ENCODE measurements at regions of chr3 and their contacts with region 1.

Region 1: GRCh38 chr3:136752422-136753325 is 496 bp upstream of the STAG1 start:
- DNase-seq: peak; percentile 99
- H3K4me3 ChIP-seq: peak overlapping the region; percentile 84 to 95 (median 88)
- H3K27ac ChIP-seq: peak overlapping the region; percentile 92 to 99 (median 98)
- H3K4me1 ChIP-seq: peaks cover 0 to 42% (median 33%) of the 10 kb centered on the region in 4 donors
- H3K27me3 ChIP-seq: no peaks in the 10 kb centered on the region
- CTCF ChIP-seq: no peak
- EP300 ChIP-seq: peak in 1 of 4 donors; percentile 17
- POLR2A ChIP-seq: peak; percentile 33 to 78

Region 2: GRCh38 chr3:135851201-135852081 is 901.2 kb before region 1 on chr3:
- intact Hi-C with region 1: no loop called
- DNase-seq: no peak
- H3K4me3 ChIP-seq: no peak overlapping the region
- H3K27ac ChIP-seq: no peak overlapping the region
- H3K4me1 ChIP-seq: no peaks in the 10 kb centered on the region
- H3K27me3 ChIP-seq: no peaks in the 10 kb centered on the region
- CTCF ChIP-seq: no peak
- EP300 ChIP-seq: no peak
- POLR2A ChIP-seq: no peak

Region 3: DNA sequence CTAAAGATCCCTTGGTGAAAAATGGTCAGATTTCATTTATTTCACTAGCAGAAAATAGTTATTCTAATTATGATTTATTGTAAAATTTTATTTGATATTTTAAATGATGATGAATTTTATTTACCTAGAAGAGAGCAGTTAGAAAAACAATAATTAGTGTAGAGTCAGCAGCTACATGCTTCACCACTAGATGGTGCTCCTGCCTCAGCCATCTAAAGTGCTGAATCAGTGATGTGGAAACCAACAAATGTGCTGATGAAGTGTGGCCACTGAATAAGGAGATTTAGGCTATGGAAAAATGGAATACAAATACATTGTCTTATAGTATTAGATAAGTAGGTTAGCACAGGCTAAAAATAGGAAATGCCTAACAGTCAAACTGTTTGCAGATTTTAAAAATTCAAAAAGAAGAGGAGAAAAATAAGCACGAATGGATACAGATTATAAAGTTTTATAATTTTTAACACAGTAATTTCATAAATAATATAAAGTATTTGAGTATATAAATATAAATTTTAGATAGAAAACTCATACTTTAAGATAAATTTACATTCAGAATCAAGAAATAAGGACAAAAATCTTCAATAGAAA is 677.4 kb before region 1 on chr3:
- intact Hi-C with region 1: loop called (anchors 5 kb)
- DNase-seq: peak; percentile 80
- H3K4me3 ChIP-seq: no peak overlapping the region
- H3K27ac ChIP-seq: peak overlapping the region in 2 of 4 donors; percentile 26 to 38
- H3K4me1 ChIP-seq: peaks cover 0 to 26% (median 12%) of the 10 kb centered on the region in 4 donors
- H3K27me3 ChIP-seq: no peaks in the 10 kb centered on the region
- CTCF ChIP-seq: peak; percentile 75 to 93 (median 84)
- EP300 ChIP-seq: no peak
- POLR2A ChIP-seq: no peak

Region 4: DNA sequence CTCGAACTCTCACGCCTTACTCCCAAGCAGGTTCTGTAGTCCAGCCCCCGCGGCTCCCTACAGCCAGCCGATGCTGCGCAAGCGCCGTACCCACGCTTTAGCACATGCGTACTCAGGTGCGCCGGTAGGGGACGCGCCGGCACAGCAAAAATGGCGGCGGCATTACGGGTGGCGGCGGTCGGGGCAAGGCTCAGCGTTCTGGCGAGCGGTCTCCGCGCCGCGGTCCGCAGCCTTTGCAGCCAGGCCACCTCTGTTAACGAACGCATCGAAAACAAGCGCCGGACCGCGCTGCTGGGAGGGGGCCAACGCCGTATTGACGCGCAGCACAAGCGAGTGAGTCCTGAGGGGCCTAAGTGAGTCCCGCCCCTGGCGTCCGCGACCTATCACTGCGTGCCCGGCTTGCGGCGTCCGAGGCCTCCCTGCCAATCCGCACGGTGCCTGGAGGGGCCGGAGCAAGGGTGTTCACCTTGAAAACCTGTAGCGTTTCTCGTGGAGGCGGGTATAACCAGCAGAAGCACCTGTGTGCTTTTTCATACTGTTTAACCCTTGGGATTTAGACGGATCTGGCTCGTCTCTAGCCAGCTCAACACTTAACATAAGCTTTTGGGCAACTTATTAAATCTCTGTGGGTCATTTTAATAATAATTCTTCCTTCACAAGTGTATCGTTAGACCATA is 502.3 kb before region 1 on chr3 and contains the start of gene PCCB:
- intact Hi-C with region 1: loop called (anchors 2 kb)
- DNase-seq: peak; percentile 97
- H3K4me3 ChIP-seq: peak within 1 kb of the TSS; percentile 66 to 72 (median 68)
- H3K27ac ChIP-seq: peak within 1 kb of the TSS; percentile 89 to 93 (median 92)
- H3K4me1 ChIP-seq: peaks cover 0 to 18% (median 15%) of the 10 kb centered on the region in 4 donors
- H3K27me3 ChIP-seq: no peaks in the 10 kb centered on the region
- CTCF ChIP-seq: peak; percentile 80 to 97 (median 96)
- EP300 ChIP-seq: no peak
- POLR2A ChIP-seq: peak; percentile 15 to 23
- total RNA-seq, gene PCCB: 24.8 to 33.9 (median 29.0) TPM

Region 5: DNA sequence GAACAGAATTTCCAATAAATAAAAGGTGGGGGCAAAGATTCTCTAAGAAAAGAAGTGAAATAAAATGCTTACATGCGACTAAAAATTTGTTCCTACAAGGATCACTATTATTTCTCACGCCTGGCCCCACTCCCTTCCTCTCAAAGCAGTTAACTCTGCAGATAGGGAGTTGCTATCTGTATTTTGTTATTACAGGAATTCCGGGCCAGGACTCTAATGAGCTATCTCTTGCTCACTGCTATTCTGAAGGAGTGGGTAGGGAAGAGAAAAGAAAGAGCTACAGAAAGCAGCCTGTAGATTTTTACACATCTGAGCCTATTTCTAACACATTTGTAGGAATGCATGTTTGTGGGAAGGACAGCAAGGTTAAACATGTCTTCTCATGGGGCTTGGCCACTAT is 362.1 kb before region 1 on chr3:
- intact Hi-C with region 1: loop called (anchors 2 kb)
- DNase-seq: no peak
- H3K4me3 ChIP-seq: no peak overlapping the region
- H3K27ac ChIP-seq: no peak overlapping the region
- H3K4me1 ChIP-seq: peaks cover 0 to 15% (median 5%) of the 10 kb centered on the region in 4 donors
- H3K27me3 ChIP-seq: no peaks in the 10 kb centered on the region
- CTCF ChIP-seq: no peak
- EP300 ChIP-seq: no peak
- POLR2A ChIP-seq: no peak

Region 6: DNA sequence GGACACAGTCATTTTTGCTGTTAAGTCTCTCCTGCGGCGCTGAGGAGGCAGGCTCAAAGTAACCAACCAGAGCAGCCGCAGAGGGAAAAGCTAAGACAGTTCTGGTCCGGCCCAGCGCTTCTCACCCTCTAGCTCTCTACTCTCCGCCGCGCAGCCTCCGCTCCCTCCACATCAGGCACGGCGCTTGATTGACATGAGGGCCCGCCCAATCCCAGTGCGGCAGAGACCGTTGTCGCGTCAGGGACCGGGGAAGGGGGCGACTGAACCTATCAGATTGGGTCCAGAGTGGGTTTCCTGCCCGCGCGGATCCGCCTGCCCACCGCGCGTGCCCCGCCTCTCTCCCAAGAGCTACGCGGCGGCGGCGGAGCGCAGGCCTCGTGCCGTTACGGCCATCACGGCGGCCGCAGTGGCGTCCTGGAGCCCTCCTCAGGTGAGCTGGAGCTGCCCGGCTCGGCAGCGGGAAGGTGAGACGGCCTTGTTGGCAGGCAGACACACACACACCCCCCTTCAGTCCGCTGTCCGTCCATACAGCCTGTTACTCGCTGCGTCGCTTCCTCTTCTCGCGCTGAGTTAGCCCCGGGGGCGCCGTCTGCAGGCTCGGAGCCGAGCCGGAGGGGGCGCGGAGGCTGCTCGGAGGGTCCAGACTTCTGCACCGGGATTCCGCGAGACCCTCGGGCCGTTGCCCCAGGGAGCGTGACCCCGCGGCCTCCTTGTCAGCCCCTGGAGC is 109.4 kb after region 1 on chr3 and contains the start of gene NCK1:
- intact Hi-C with region 1: loop called (anchors 1 kb)
- DNase-seq: peak; percentile 99
- H3K4me3 ChIP-seq: peak within 1 kb of the TSS; percentile 59 to 92 (median 74)
- H3K27ac ChIP-seq: peak within 1 kb of the TSS; percentile 88 to 96 (median 93)
- H3K4me1 ChIP-seq: peaks cover 0 to 24% (median 18%) of the 10 kb centered on the region in 4 donors
- H3K27me3 ChIP-seq: no peaks in the 10 kb centered on the region
- CTCF ChIP-seq: no peak
- EP300 ChIP-seq: no peak
- POLR2A ChIP-seq: peak; percentile 67 to 83
- total RNA-seq, gene NCK1: 37.2 to 55.1 (median 47.0) TPM

Region 7: GRCh38 chr3:137013955-137014688 is 261.4 kb after region 1 on chr3:
- intact Hi-C with region 1: loop called (anchors 1 kb)
- DNase-seq: peak; percentile 95
- H3K4me3 ChIP-seq: peak overlapping the region; percentile 24 to 57 (median 51)
- H3K27ac ChIP-seq: peak overlapping the region; percentile 57 to 79 (median 74)
- H3K4me1 ChIP-seq: peaks cover 0 to 11% (median 3%) of the 10 kb centered on the region in 4 donors
- H3K27me3 ChIP-seq: no peaks in the 10 kb centered on the region
- CTCF ChIP-seq: peak; percentile 82 to 94 (median 92)
- EP300 ChIP-seq: no peak
- POLR2A ChIP-seq: no peak